Sigmoid colon (tissue), 7 donors: ENCODE measurements at regions of chr17 and their contacts with region 1.

Region 1: DNA sequence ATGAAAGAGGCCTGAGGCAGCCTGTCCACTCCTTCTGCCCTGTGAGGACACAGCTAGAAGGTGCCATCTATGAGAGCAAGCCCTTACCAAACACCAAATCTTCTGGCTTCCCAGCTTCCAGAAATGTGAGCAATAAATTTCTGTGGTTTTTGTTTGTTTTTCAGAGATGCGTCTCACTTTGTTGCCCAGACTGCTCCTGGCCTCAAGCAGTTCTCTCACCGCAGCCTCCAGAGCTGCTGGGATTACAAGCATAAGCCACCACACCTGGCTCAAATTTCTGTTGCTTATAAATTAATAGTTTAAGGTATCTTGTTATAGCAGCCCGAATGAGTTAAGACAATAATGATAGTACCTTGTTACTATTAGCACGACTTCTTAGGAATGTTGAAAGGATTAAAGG is 12.5 kb upstream of the SLC16A11 start:
- DNase-seq: no peak
- H3K4me3 ChIP-seq: no peak overlapping the region
- H3K27ac ChIP-seq: no peak overlapping the region
- H3K4me1 ChIP-seq: no peaks in the 10 kb centered on the region
- H3K27me3 ChIP-seq: peaks cover 0 to 3% (median 0%) of the 10 kb centered on the region in 3 donors
- CTCF ChIP-seq: no peak
- EP300 ChIP-seq: no peak
- POLR2A ChIP-seq: no peak

Region 2: DNA sequence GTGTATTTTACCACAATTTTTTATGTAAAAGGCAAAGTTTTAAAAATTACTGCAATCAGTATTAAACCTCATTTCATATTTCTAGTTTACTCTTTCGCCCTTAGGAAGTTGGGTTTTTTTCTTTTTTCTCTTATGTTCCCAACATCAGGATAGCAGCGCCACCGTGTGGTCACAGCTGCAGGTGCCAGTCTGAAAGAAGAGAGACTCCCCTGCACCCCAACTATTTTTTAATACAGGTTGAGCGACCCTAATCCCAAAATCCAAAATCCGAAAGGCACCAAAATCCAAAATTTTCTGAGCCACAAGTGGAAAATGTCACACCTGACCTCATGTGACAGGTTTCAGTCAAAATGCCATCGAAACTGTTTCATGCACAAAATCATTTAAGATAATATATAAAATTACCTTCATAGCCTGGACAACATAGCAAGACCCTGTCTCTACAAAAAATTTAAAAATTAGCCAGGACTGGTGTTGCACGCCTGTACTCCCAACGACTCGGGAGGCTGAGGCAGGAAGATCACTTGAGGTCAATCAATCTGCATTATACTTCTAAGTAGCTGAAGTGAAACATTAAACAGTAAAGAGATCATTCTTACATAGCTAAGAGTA is 80.0 kb after region 1 on chr17:
- intact Hi-C with region 1: loop called (anchors 1 kb)
- DNase-seq: peak; percentile 80
- H3K4me3 ChIP-seq: no peak overlapping the region
- H3K27ac ChIP-seq: no peak overlapping the region
- H3K4me1 ChIP-seq: no peaks in the 10 kb centered on the region
- H3K27me3 ChIP-seq: peaks cover 3 to 66% (median 30%) of the 10 kb centered on the region in 3 donors
- CTCF ChIP-seq: peak; percentile 74 to 89 (median 84)
- EP300 ChIP-seq: no peak
- POLR2A ChIP-seq: no peak

Region 3: GRCh38 chr17:7177196-7177953 is 121.0 kb after region 1 on chr17:
- intact Hi-C with region 1: loop called (anchors 2 kb)
- DNase-seq: peak; percentile 82
- H3K4me3 ChIP-seq: peak overlapping the region; percentile 8 to 41 (median 24)
- H3K27ac ChIP-seq: no peak overlapping the region
- H3K4me1 ChIP-seq: peaks cover 0 to 18% (median 16%) of the 10 kb centered on the region in 4 donors
- H3K27me3 ChIP-seq: peaks cover 0 to 50% (median 26%) of the 10 kb centered on the region in 3 donors
- CTCF ChIP-seq: peak; percentile 63 to 93 (median 68)
- EP300 ChIP-seq: no peak
- POLR2A ChIP-seq: no peak